ENCODE measurements at regions of chr2 and their contacts with region 1.

Region 1: DNA sequence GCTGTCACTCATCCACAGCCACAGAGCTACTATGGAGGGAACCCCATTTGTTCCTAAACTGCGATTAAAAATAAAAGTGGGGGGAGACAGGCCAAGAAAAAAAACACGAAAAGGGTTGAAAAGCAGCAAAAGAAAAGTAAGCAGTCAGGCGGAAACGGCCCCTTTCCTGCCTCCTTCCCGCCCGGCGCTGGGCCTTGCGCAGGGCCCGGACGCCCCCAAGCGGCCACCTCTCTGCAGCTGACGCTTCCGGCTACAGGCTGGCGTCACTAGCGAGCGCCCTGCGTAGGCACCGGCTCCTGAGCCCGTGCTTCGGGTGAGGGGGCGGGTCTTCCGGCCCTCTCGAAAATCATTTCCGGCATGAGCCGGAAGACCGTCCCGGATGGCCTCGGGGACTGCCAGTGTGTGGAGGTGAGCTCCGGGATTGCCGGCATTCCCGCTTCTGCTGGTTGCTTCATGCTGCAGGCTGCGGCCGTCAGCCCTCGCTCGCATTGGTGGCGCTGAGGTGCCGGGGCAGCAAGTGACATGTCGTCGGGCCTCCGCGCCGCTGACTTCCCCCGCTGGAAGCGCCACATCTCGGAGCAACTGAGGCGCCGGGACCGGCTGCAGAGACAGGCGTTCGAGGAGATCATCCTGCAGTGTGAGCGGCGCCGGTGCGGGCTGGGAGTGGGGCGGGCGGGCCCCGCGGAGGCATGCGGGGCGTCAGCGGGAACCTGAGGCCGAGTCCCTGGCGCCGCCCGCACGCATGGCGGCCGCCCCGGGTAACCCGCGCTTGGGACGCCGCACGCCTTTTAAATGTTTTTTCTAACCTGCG is at the start of gene ATG16L1:
- DNase-seq: peak; percentile 98
- H3K4me3 ChIP-seq: peak within 1 kb of the TSS; percentile 92 to 99 (median 96)
- H3K27ac ChIP-seq: peak within 1 kb of the TSS; percentile 90 to 97 (median 94)
- H3K4me1 ChIP-seq: peaks cover 0 to 40% (median 33%) of the 10 kb centered on the region in 4 donors
- H3K27me3 ChIP-seq: no peaks in the 10 kb centered on the region
- CTCF ChIP-seq: peak; percentile 76 to 88 (median 84)
- EP300 ChIP-seq: peak in 2 of 4 donors; percentile 19 to 77
- POLR2A ChIP-seq: peak; percentile 77 to 83
- total RNA-seq, gene ATG16L1: 19.6 to 37.3 (median 32.4) TPM

Region 2: GRCh38 chr2:232611551-232612218 is 639.8 kb before region 1 on chr2:
- intact Hi-C with region 1: loop called (anchors 1 kb)
- DNase-seq: no peak
- H3K4me3 ChIP-seq: no peak overlapping the region
- H3K27ac ChIP-seq: no peak overlapping the region
- H3K4me1 ChIP-seq: no peaks in the 10 kb centered on the region
- H3K27me3 ChIP-seq: no peaks in the 10 kb centered on the region
- CTCF ChIP-seq: peak; percentile 24 to 79 (median 58)
- EP300 ChIP-seq: no peak
- POLR2A ChIP-seq: no peak

Region 3: GRCh38 chr2:232852676-232853075 is 398.8 kb before region 1 on chr2:
- intact Hi-C with region 1: loop called (anchors 2 kb)
- DNase-seq: no peak
- H3K4me3 ChIP-seq: no peak overlapping the region
- H3K27ac ChIP-seq: no peak overlapping the region
- H3K4me1 ChIP-seq: peaks cover 0 to 20% (median 3%) of the 10 kb centered on the region in 4 donors
- H3K27me3 ChIP-seq: no peaks in the 10 kb centered on the region
- CTCF ChIP-seq: no peak
- EP300 ChIP-seq: no peak
- POLR2A ChIP-seq: no peak

Region 4: GRCh38 chr2:233185963-233186362 is 65.5 kb before region 1 on chr2:
- intact Hi-C with region 1: no loop called
- DNase-seq: no peak
- H3K4me3 ChIP-seq: no peak overlapping the region
- H3K27ac ChIP-seq: no peak overlapping the region
- H3K4me1 ChIP-seq: no peaks in the 10 kb centered on the region
- H3K27me3 ChIP-seq: no peaks in the 10 kb centered on the region
- CTCF ChIP-seq: no peak
- EP300 ChIP-seq: no peak
- POLR2A ChIP-seq: no peak

Region 5: DNA sequence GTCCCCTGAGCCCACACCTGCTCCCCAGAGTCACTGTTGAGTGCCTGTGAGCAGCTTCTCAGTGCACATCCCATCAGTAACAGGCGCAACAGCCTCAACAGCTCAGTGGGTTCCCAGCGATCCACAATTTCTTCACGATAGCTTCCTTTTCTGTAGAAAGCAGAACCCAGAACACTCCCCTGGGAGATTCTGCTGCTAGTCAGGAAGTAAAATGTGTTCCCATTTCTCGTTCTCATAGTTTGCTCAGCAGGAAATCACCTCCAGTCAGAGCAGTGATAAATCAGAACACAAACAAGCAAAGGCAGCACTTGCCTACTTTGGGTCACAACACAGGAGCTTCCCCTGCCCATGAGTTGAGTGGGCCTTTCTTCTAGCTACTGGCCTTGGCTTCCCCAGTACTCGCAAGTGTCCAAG is 49.0 kb before region 1 on chr2:
- intact Hi-C with region 1: no loop called
- DNase-seq: no peak
- H3K4me3 ChIP-seq: no peak overlapping the region
- H3K27ac ChIP-seq: no peak overlapping the region
- H3K4me1 ChIP-seq: no peaks in the 10 kb centered on the region
- H3K27me3 ChIP-seq: no peaks in the 10 kb centered on the region
- CTCF ChIP-seq: no peak
- EP300 ChIP-seq: no peak
- POLR2A ChIP-seq: no peak

Region 6: GRCh38 chr2:233353769-233354499 is 102.4 kb after region 1 on chr2 and contains the start of gene DGKD:
- intact Hi-C with region 1: loop called (anchors 10 kb)
- DNase-seq: peak; percentile 76
- H3K4me3 ChIP-seq: peak within 1 kb of the TSS; percentile 63 to 81 (median 74)
- H3K27ac ChIP-seq: peak within 1 kb of the TSS; percentile 56 to 74 (median 70)
- H3K4me1 ChIP-seq: peaks cover 0 to 46% (median 36%) of the 10 kb centered on the region in 4 donors
- H3K27me3 ChIP-seq: no peaks in the 10 kb centered on the region
- CTCF ChIP-seq: peak in 2 of 4 experiments; percentile 21 to 59
- EP300 ChIP-seq: no peak
- POLR2A ChIP-seq: no peak
- total RNA-seq, gene DGKD: 10.7 to 20.6 (median 16.0) TPM

Region 7: GRCh38 chr2:233854241-233854981 is 602.9 kb after region 1 on chr2 and contains the start of gene HJURP:
- intact Hi-C with region 1: no loop called
- DNase-seq: peak; percentile 95
- H3K4me3 ChIP-seq: peak within 1 kb of the TSS; percentile 47 to 60 (median 56)
- H3K27ac ChIP-seq: peak within 1 kb of the TSS; percentile 52 to 64 (median 56)
- H3K4me1 ChIP-seq: peaks cover 0 to 15% (median 10%) of the 10 kb centered on the region in 4 donors
- H3K27me3 ChIP-seq: peaks cover 0 to 18% (median 0%) of the 10 kb centered on the region in 3 donors
- CTCF ChIP-seq: no peak
- EP300 ChIP-seq: no peak
- POLR2A ChIP-seq: peak; percentile 37 to 50
- total RNA-seq, gene HJURP: 0.28 to 2.1 (median 1.0) TPM